Calu3 (cell line): ENCODE measurements at regions of chr11 and their contacts with region 1.

Region 1: DNA sequence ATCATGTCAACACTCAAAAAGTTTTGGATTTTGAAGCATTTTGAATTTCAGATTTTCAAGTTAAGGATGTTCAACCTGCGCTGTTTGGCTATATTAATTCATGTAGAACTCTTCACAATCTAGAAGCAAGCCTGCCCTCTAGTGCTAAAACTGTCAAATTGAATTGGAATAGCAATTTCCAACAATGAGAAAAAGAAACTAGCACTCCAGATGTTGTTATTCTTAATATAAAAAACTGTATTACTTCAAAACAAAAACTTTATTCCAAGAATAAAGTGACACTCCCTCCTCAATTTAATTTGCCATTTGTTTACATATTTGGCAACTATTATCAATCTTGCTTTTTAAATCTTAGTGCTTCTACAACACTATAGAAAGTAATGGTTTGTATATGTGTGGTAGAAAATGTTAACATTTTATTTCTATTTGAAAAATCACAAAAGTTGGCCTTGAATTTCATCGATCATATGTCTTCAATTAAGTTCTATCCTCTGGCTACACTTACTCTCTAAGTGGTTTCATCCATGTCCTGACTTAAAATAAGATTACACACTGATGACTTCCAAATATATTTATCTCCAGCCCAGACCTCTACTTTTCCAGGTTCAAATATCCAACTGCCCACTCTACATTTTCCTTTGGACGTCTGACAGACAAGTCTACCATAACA is 36.6 kb downstream of the DCUN1D5 start:
- DNase-seq: peak; percentile 0
- H3K4me3 Mint-ChIP-seq: no peak overlapping the region
- H3K27ac Mint-ChIP-seq: no peak overlapping the region
- H3K4me1 Mint-ChIP-seq: no peaks in the 10 kb centered on the region
- H3K27me3 Mint-ChIP-seq: no peaks in the 10 kb centered on the region
- CTCF ChIP-seq: no peak

Region 2: GRCh38 chr11:102599642-102600261 is 455.6 kb before region 1 on chr11:
- CTCF ChIA-PET with region 1: no interaction called
- intact Hi-C with region 1: no loop called
- DNase-seq: peak; percentile 48
- H3K4me3 Mint-ChIP-seq: no peak overlapping the region
- H3K27ac Mint-ChIP-seq: peak overlapping the region; percentile 70
- H3K4me1 Mint-ChIP-seq: peaks cover 46% of the 10 kb centered on the region
- H3K27me3 Mint-ChIP-seq: no peaks in the 10 kb centered on the region
- CTCF ChIP-seq: no peak

Region 3: GRCh38 chr11:102733232-102733875 is 322.0 kb before region 1 on chr11:
- CTCF ChIA-PET with region 1: no interaction called
- intact Hi-C with region 1: loop called (anchors 10 kb)
- DNase-seq: peak; percentile 74
- H3K4me3 Mint-ChIP-seq: no peak overlapping the region
- H3K27ac Mint-ChIP-seq: no peak overlapping the region
- H3K4me1 Mint-ChIP-seq: no peaks in the 10 kb centered on the region
- H3K27me3 Mint-ChIP-seq: no peaks in the 10 kb centered on the region
- CTCF ChIP-seq: peak; percentile 64

Region 4: GRCh38 chr11:102810945-102811660 is 244.3 kb before region 1 on chr11:
- CTCF ChIA-PET with region 1: no interaction called
- intact Hi-C with region 1: loop called (anchors 5 kb)
- DNase-seq: no peak
- H3K4me3 Mint-ChIP-seq: no peak overlapping the region
- H3K27ac Mint-ChIP-seq: no peak overlapping the region
- H3K4me1 Mint-ChIP-seq: peaks cover 9% of the 10 kb centered on the region
- H3K27me3 Mint-ChIP-seq: peaks cover 7% of the 10 kb centered on the region
- CTCF ChIP-seq: peak; percentile 36

Region 5: GRCh38 chr11:102831489-102832440 is 223.6 kb before region 1 on chr11:
- CTCF ChIA-PET with region 1: no interaction called
- intact Hi-C with region 1: loop called (anchors 1 kb)
- DNase-seq: peak; percentile 79
- H3K4me3 Mint-ChIP-seq: peak overlapping the region; percentile 72
- H3K27ac Mint-ChIP-seq: no peak overlapping the region
- H3K4me1 Mint-ChIP-seq: peaks cover 34% of the 10 kb centered on the region
- H3K27me3 Mint-ChIP-seq: peaks cover 12% of the 10 kb centered on the region
- CTCF ChIP-seq: peak; percentile 57

Region 6: GRCh38 chr11:102914238-102915043 is 140.9 kb before region 1 on chr11:
- CTCF ChIA-PET with region 1: no interaction called
- intact Hi-C with region 1: loop called (anchors 2 kb)
- DNase-seq: peak; percentile 27
- H3K4me3 Mint-ChIP-seq: no peak overlapping the region
- H3K27ac Mint-ChIP-seq: no peak overlapping the region
- H3K4me1 Mint-ChIP-seq: no peaks in the 10 kb centered on the region
- H3K27me3 Mint-ChIP-seq: peaks cover 28% of the 10 kb centered on the region
- CTCF ChIP-seq: peak; percentile 45

Region 7: DNA sequence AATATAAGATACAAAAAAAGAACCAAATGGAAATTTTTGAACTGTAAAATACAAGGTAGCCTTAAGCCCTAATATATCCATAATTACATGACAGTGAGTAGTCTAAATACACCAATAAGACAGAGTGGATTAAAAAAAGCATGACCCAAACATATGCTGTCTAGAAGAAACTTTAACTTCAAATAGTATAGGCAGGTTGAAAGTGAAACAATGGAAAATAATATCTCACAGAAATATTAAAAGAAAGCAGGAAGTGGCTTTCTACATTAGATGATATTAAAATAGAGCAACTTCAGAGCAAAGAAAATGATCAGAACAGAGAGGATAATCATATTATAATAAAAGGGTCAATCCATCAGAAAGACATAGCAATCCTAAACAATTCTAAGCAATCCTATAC is 14.8 kb after region 1 on chr11:
- CTCF ChIA-PET with region 1: no interaction called
- intact Hi-C with region 1: no loop called
- DNase-seq: no peak
- H3K4me3 Mint-ChIP-seq: no peak overlapping the region
- H3K27ac Mint-ChIP-seq: no peak overlapping the region
- H3K4me1 Mint-ChIP-seq: peaks cover 11% of the 10 kb centered on the region
- H3K27me3 Mint-ChIP-seq: no peaks in the 10 kb centered on the region
- CTCF ChIP-seq: no peak

Region 8: GRCh38 chr11:103488031-103488461 is 432.7 kb after region 1 on chr11:
- CTCF ChIA-PET with region 1: no interaction called
- intact Hi-C with region 1: no loop called
- DNase-seq: no peak
- H3K4me3 Mint-ChIP-seq: no peak overlapping the region
- H3K27ac Mint-ChIP-seq: no peak overlapping the region
- H3K4me1 Mint-ChIP-seq: no peaks in the 10 kb centered on the region
- H3K27me3 Mint-ChIP-seq: no peaks in the 10 kb centered on the region
- CTCF ChIP-seq: no peak

Region 9: DNA sequence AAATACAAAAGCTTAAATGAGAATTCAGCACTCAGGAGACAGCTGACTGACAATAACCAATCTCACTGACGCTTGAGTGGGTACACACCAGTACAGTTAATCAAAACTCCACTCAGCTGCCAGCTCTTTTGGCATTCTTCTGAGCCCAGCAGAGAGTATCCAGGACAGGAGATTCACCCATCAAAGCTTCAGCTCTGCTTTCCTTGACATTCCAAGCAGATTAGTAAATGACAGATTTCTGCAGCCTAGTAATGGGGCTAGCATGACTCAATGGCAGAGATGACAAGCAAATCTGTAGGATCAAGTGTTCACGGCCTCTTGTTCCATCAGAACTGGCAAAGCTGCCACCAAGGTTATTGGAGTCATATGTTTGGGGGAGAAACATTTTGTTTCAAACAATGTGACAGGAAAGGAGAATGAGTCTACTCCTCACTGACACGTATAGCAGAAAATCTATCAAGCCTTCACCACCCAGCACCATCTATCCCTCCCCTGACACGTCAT is 473.9 kb after region 1 on chr11:
- CTCF ChIA-PET with region 1: no interaction called
- intact Hi-C with region 1: no loop called
- DNase-seq: no peak
- H3K4me3 Mint-ChIP-seq: no peak overlapping the region
- H3K27ac Mint-ChIP-seq: no peak overlapping the region
- H3K4me1 Mint-ChIP-seq: peaks cover 10% of the 10 kb centered on the region
- H3K27me3 Mint-ChIP-seq: no peaks in the 10 kb centered on the region
- CTCF ChIP-seq: no peak